Posterior cingulate gyrus (tissue), 11 donors: ENCODE measurements at regions of chr4 and their contacts with region 1.

Region 1: DNA sequence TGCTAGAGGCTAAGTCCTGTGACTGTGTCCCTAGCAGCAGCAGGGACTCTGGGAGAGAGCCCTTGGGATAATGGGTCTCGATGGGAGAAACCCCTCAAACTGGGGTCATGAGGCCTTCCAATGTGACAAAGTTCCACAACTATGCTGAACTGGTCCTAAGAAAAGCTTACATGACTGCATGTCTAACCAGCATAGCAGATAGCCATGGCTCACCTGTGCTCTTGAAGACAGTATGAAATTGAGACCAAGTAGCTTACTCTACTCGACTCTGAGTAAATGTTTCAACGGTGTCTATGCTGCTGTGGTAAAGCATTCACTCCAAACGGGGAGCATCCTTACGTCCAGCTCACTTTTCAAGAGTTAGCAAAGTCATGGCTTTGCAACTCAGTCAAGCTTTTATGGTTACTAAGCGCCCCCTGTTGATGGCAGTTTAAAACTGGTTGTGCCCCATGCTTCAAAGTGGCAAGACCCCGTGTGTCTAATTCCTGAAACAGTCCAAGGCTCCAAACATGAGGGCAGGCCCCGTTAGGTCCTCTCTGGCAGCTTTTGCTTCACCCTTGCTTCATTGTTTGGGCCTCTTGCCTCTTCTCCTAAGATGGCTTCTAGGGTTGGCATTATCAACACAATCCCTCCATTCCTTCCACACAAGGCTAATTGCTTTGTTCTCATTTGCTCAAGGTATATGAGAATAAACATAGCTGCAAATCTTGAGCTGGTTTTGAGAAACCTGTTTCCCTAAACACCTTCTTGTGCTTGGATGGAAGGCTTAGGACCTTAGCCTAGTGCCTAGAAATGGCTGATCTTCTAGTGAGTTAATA is 46.6 kb downstream of the CCNG2 start:
- DNase-seq: peak in 8 of 10 donors; percentile 28 to 90 (median 62)

Region 2: GRCh38 chr4:77095101-77095821 is 108.3 kb before region 1 on chr4:
- intact Hi-C with region 1: loop called (anchors 1 kb)
- DNase-seq: peak; percentile 51 to 97 (median 78)